ENCODE measurements at regions of chr7 and their contacts with region 1.

Region 1: GRCh38 chr7:42745357-42746059 is 166.4 kb downstream of the C7orf25 start:
- DNase-seq: peak in 1 of 2 experiments; percentile 85
- H3K4me3 ChIP-seq: no peak overlapping the region
- H3K27ac ChIP-seq: no peak overlapping the region
- H3K4me1 ChIP-seq: no peaks in the 10 kb centered on the region
- H3K27me3 ChIP-seq: no peaks in the 10 kb centered on the region
- CTCF ChIP-seq: peak; percentile 64 to 88 (median 64)
- EP300 ChIP-seq: no peak
- POLR2A ChIP-seq: no peak
- RAD21 ChIP-seq: peak; percentile 22 to 35; a peak in 3 of 4 replicates

Region 2: DNA sequence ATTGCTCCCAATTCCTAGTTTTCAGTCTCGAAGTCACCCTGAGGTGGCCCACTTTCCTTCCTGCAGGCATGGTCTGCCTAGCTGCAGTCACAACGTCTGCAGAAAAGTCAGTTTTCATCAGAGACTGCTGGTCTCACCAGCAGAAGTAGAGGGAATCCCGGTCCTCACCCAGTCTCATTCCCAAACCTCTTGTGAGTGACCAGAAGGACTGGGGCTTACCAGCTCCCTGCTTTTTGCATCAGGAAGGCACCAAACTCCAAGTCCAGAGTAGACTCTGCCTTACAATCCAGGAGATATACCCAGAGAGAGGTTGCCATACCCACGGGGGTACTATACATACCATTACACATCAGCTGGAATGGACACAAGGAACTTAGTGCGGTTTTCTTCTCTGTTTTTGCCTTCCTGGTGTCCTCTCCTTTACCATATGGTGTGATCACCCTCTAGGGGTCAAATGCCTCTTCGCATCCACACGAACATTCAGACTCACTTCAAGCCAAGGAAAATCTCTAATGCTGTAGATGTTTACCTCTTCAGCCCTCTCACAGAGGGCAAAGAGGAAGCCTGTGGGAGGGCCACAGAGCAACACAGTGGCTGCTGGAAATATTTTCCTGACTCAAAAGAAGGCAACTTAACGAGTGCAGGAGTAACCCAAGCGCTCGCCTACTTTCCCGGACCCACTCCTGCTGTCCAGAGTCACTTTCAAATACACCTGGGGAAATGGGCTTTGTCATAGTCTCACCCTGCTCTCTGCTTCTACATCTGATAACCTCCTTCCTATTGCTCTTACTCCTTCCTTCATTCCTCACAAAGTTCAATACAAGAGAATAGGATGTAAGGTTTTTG is 54.5 kb before region 1 on chr7:
- CTCF ChIA-PET with region 1: interaction called, 14 read pairs
- POLR2A ChIA-PET with region 1: no interaction called
- DNase-seq: peak in 1 of 2 experiments; percentile 52
- H3K4me3 ChIP-seq: no peak overlapping the region
- H3K27ac ChIP-seq: no peak overlapping the region
- H3K4me1 ChIP-seq: peaks cover 2 to 14% (median 5%) of the 10 kb centered on the region in 4 experiments; a peak in 6 of 7 replicates
- H3K27me3 ChIP-seq: peaks cover 0 to 5% (median 0%) of the 10 kb centered on the region in 4 experiments; a peak in 3 of 7 replicates
- CTCF ChIP-seq: peak; percentile 19 to 82 (median 65)
- EP300 ChIP-seq: no peak
- POLR2A ChIP-seq: no peak
- RAD21 ChIP-seq: peak; percentile 92 to 94

Region 3: DNA sequence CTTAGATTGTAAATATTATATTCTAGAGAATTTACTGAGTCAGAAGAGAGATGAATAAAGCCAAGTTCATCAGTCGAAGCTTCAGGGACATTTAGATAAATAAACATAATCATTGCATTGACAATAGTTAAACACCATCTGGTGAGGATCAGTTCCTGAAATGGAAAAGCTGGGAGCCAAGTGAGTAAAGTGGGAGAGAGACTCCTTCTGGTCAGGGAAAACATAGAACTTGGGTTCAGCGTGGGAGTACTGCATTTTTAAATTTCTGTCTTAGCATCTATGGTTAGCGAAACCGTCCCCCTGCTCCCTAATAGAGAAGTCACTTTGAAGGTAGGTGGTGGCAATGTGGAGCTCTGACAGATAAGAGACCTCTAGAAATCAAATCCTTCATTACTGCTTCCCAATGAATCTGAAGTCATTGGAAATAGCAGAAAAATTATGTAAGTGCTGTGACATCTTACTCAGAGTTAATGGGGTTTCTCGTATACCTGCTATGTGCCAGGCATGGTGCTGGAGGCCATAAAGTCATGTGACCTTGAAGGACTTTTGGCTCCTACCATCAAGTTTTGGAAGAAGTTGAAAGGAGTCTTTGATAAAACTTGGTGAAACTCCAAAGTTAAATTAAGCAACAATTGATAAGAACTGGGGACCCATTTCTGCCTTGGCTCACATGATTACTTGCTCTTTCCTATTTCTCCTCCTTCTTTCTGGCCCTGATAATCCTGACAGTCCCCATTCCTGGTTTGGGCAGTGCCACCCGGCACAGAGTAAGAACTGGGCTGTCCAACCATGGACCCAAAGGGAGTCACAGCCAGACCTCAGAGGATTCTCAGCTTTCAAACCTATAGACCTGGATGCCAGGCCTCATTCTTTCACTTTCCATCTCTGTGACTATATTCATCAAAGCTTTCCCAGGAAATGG is 44.8 kb before region 1 on chr7:
- CTCF ChIA-PET with region 1: interaction called, 13 read pairs
- POLR2A ChIA-PET with region 1: no interaction called
- DNase-seq: no peak
- H3K4me3 ChIP-seq: no peak overlapping the region
- H3K27ac ChIP-seq: no peak overlapping the region
- H3K4me1 ChIP-seq: no peaks in the 10 kb centered on the region
- H3K27me3 ChIP-seq: peaks cover 0 to 2% (median 0%) of the 10 kb centered on the region in 4 experiments; a peak in 1 of 7 replicates
- CTCF ChIP-seq: no peak
- EP300 ChIP-seq: no peak
- POLR2A ChIP-seq: no peak
- RAD21 ChIP-seq: peak; percentile 6 to 29; a peak in 3 of 4 replicates

Region 4: DNA sequence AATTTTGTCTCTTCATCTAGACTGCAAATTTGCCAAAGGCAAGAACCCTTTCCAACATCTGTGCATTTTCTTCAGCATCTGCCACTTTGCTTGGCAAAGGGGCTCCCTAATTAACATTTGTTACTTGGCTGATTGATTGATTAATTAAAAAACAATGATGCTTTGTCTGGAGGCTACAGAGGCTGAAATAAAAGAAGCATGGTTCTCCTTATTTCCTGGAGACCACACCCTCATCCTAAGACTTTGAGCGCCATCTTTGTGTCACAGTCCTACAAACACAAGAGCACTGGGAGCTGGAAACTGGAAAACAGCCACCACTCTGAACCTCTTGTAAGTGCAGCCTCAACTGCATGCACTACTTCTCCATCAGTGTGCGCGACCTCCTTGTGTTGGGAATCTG is 22.8 kb before region 1 on chr7:
- CTCF ChIA-PET with region 1: interaction called, 31 read pairs
- POLR2A ChIA-PET with region 1: no interaction called
- DNase-seq: no peak
- H3K4me3 ChIP-seq: no peak overlapping the region
- H3K27ac ChIP-seq: no peak overlapping the region
- H3K4me1 ChIP-seq: no peaks in the 10 kb centered on the region; a peak in 1 of 7 replicates
- H3K27me3 ChIP-seq: no peaks in the 10 kb centered on the region
- CTCF ChIP-seq: no peak
- EP300 ChIP-seq: no peak
- POLR2A ChIP-seq: no peak
- RAD21 ChIP-seq: peak; percentile 20 to 32; a peak in 3 of 4 replicates

Region 5: DNA sequence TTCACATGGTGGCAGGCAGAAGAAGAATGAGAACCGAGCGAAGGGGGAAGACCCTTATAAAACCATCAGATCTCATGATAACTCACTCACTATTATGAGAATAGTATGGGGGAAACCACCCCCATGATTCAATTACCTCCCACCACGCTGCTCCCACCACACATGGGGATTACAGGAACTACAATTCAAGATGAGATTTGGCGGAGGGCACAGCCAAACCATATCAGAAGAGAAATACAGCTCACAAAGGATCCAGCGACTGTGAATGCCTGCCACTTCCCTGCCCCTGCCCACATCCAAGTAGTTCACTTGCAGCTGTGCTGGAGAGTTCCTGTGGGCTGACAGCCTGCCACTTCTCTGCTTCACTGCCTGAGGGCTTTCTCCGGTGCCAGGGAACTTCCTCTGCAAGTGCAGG is 17.6 kb after region 1 on chr7:
- CTCF ChIA-PET with region 1: interaction called, 25 read pairs
- POLR2A ChIA-PET with region 1: no interaction called
- DNase-seq: no peak
- H3K4me3 ChIP-seq: no peak overlapping the region
- H3K27ac ChIP-seq: no peak overlapping the region
- H3K4me1 ChIP-seq: no peaks in the 10 kb centered on the region
- H3K27me3 ChIP-seq: no peaks in the 10 kb centered on the region
- CTCF ChIP-seq: no peak
- EP300 ChIP-seq: no peak
- POLR2A ChIP-seq: no peak
- RAD21 ChIP-seq: no peak

Region 6: GRCh38 chr7:42831718-42832431 is 86.4 kb after region 1 on chr7:
- CTCF ChIA-PET with region 1: interaction called, 22 read pairs
- POLR2A ChIA-PET with region 1: no interaction called
- DNase-seq: no peak
- H3K4me3 ChIP-seq: no peak overlapping the region
- H3K27ac ChIP-seq: no peak overlapping the region
- H3K4me1 ChIP-seq: no peaks in the 10 kb centered on the region
- H3K27me3 ChIP-seq: no peaks in the 10 kb centered on the region
- CTCF ChIP-seq: peak; percentile 41 to 71 (median 69)
- EP300 ChIP-seq: no peak
- POLR2A ChIP-seq: no peak
- RAD21 ChIP-seq: peak; percentile 74 to 82

Region 7: DNA sequence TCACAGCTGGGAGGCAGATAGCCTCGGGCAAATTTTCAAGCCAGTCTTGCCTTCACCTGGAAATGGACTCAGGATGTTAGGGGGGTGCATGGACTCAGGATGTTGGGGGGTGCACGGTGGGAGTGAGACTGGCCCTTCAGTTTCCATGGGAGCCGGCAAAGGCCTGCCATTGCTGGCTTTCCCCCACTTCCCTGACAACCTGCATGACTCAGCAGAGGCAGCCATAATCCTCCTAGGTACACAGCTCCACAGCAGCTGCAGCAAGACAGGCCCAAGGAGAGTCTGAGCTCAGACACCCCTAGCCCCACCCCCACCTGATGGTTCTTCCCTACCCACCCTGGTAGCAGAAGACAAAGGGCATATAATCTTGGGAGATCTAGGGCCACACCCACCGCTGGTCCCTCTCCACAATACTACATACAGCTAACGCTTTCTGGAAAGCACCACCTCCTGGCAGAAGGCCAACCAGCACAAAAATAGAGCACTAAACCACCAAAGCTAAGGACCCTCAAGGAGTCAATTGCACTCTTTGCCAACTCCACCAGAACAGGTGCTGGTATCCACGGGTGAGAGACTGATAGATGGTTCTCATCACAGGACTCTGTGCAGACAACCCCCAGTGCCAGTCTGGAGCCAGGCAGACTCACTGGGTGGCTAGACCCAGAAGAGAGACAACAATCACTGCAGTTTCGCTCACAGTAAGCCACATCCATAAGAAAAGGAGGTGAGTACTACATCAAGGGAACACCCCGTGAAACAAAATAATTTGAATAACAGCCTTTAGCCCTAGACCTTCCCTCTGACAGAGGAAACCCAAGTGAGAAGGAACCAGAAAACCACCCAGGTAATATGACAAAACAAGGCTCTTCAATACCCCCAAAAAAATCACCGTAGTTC is 148.1 kb after region 1 on chr7:
- CTCF ChIA-PET with region 1: no interaction called
- POLR2A ChIA-PET with region 1: no interaction called
- DNase-seq: no peak
- H3K4me3 ChIP-seq: no peak overlapping the region; a peak in 1 of 8 replicates
- H3K27ac ChIP-seq: no peak overlapping the region; the same call in 1 of the 2 replicates
- H3K4me1 ChIP-seq: peaks cover 0 to 2% (median 0%) of the 10 kb centered on the region in 4 experiments; a peak in 3 of 7 replicates
- H3K27me3 ChIP-seq: no peaks in the 10 kb centered on the region
- CTCF ChIP-seq: no peak
- EP300 ChIP-seq: peak in 1 of 2 experiments; percentile 34; a peak in 1 of 3 replicates
- POLR2A ChIP-seq: no peak
- RAD21 ChIP-seq: no peak

Region 8: DNA sequence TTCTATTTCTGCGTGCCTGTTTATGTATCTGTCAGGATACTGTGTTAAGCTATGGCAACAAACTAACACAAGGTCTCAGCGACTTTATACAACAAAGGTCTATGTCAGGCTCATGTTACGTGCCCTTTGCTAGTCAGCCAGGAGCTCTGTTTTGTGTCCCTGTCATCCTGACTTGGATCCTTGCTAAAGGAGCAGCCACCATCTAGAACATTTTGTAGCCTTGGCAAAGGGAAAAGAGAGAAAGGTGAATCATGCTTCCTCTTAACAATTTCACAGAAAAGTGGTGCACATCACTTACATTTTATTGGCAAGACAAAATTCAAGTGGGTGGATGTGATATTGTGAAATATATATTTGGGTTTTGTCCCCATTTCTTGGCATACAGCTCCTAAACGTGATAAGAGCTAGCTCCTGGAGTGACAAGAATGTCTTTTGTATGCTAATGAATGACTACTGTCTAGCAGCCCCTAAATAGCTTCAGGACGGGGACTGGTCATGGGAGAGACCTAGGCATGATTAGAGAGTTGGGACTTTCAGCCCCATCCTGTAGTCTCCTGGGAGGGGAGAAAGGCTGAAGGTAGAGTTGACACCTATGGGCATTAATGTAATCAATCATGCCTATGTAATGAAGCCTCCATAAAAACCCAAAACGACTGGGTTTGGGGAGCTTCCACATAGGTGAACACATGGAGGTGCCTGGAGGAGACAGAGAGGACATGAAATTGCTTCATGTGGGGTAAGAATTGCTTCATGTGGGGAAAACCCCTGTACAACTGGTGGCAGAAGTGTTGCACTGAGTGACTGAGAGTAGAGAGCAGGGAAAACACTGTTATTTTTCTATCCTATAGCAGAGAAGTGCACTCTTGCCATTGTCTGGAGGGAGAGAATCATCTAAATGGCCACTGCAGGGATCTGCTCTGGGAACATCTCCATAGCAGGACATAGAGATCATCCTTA is 219.6 kb after region 1 on chr7:
- CTCF ChIA-PET with region 1: no interaction called
- POLR2A ChIA-PET with region 1: no interaction called
- DNase-seq: no peak
- H3K4me3 ChIP-seq: no peak overlapping the region
- H3K27ac ChIP-seq: no peak overlapping the region
- H3K4me1 ChIP-seq: peaks cover 0 to 3% (median under 1%) of the 10 kb centered on the region in 4 experiments; a peak in 1 of 7 replicates
- H3K27me3 ChIP-seq: no peaks in the 10 kb centered on the region
- CTCF ChIP-seq: no peak
- EP300 ChIP-seq: no peak
- POLR2A ChIP-seq: no peak
- RAD21 ChIP-seq: no peak

Measured in H1 (cell line).